ENCODE measurements at regions of chr17 and their contacts with region 1.

Region 1: DNA sequence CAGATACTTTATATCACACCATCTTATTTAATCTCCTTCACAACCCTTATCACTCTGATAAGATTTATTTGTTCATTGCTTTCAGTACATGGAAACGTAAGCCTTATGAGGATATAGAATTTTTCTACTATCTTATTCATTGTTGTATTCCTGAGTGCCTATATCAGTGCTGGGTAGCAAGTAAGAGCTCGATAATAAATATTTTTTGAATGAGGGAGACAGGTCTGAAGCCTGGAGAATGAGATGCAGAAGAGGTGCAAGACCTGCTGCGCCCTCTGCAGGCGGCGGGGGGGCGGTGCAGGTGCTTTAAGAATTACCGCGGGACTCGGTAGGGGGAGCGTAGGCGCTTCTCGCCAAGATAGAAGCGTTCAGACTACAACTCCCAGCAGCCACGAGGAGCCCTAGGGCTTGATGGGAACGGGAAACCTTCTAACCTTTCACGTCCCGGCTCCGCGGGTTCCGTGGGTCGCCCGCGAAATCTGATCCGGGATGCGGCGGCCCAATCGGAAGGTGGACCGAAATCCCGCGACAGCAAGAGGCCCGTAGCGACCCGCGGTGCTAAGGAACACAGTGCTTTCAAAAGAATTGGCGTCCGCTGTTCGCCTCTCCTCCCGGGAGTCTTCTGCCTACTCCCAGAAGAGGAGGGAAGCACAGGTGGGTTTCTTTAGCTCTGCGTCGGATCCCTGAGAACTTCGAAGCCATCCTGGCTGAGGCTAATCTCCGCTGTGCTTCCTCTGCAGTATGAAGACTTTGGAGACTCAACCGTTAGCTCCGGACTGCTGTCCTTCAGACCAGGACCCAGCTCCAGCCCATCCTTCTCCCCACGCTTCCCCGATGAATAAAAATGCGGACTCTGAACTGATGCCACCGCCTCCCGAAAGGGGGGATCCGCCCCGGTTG is at the start of gene WRAP53:
- DNase-seq: peak; percentile 93 to 97 (median 95)
- ATAC-seq: peak; percentile 77
- H3K4me3 ChIP-seq: peak within 1 kb of the TSS; percentile 81 to 92
- H3K4me3 Mint-ChIP-seq: peak within 1 kb of the TSS; percentile 97
- H3K27ac ChIP-seq: peak within 1 kb of the TSS; percentile 98 to 100
- H3K27ac Mint-ChIP-seq: peak within 1 kb of the TSS; percentile 100
- H3K4me1 ChIP-seq: peaks cover 32% of the 10 kb centered on the region
- H3K4me1 Mint-ChIP-seq: peaks cover 37% of the 10 kb centered on the region
- H3K27me3 ChIP-seq: no peaks in the 10 kb centered on the region
- H3K27me3 Mint-ChIP-seq: no peaks in the 10 kb centered on the region
- CTCF ChIP-seq: peak; percentile 98
- total RNA-seq, gene WRAP53: 5.2 to 6.6 TPM

Region 2: DNA sequence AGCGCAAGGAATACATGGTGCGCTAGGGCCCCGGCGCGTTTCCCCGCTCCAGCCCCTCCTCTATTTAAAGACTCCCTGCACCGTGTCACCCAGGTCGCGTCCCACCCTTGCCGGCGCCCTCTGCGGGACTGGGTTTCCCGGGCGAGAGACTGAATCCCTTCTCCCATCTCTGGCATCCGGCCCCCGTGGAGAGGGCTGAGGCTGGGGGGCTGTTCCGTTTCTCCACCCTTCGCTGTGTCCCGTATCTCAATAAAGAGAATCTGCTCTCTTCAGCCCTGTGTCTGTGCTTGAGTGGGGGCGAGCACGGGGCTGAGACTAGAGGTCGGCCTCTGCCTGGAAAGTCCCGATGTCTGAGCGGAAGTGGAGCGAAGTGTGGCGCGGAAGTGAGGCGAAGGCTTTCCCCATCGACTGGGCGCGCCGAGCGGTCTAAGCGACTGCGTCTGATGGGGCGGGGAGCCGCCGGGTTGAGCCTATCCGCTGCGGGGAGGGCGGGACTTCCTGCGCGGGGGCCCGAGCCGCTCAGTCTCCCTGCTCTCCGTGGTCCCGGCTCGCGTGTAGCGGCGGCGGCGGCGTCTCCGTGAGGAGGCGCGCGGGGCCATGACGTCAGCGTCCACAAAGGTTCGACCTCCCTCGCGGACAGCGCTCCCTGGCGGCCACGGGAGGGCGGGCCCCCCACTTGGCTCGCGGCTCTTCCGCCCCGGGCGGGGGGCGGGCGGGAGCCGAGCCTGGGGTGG is 673.7 kb before region 1 on chr17:
- CTCF ChIA-PET with region 1: no interaction called
- POLR2A ChIA-PET with region 1: interaction called, 3 read pairs
- intact Hi-C with region 1: loop called in 1 of 2 experiments (anchors 5 kb)
- DNase-seq: peak; percentile 94 to 100 (median 97)
- ATAC-seq: peak; percentile 79
- H3K4me3 ChIP-seq: peak overlapping the region; percentile 69 to 70
- H3K4me3 Mint-ChIP-seq: peak overlapping the region; percentile 98
- H3K27ac ChIP-seq: peak overlapping the region; percentile 95 to 99
- H3K27ac Mint-ChIP-seq: peak overlapping the region; percentile 100
- H3K4me1 ChIP-seq: peaks cover 63% of the 10 kb centered on the region
- H3K4me1 Mint-ChIP-seq: peaks cover 78% of the 10 kb centered on the region
- H3K27me3 ChIP-seq: no peaks in the 10 kb centered on the region
- H3K27me3 Mint-ChIP-seq: no peaks in the 10 kb centered on the region
- CTCF ChIP-seq: peak; percentile 61

Region 3: DNA sequence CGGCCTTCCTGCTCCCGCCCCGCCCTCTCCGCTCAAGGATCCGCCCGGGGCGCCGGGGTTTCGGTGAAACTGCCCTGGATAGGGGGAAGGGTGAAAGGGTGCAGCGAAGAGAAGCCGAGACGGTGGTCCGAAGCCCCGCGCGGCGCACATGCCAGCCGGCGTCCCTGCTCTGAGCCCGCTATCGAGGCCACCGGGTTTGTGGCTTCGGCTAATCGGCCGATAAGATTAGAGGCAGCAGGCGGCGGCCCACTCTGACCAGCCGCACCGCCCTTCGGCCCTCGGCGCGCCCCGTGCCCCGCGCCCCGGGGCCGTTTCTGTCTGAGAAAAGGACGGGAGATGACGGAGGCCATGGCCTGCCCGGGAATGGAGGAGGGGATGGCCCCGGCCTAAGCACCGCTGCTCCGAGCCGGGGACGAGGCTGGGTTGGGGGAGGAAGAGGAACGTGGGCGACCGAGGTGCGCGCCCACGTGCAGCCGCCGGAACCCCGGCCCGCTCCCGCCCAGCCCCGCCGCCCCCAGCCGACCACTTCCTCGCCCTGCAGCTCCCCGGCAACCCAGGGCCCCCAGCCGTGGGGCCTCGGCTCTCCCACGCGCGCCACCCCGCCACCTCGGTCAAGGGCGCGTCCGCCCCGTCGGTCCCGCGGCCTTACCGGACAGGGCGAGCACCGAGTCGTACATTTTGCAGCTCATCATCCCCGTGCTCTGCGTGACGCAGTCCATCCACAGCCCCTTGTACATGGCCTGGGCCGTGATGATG is 426.8 kb before region 1 on chr17:
- CTCF ChIA-PET with region 1: no interaction called
- POLR2A ChIA-PET with region 1: no interaction called
- intact Hi-C with region 1: no loop called
- DNase-seq: peak in 6 of 9 experiments; percentile 40 to 71 (median 52)
- ATAC-seq: peak; percentile 57
- H3K4me3 ChIP-seq: peak overlapping the region; percentile 45 to 61
- H3K4me3 Mint-ChIP-seq: peak overlapping the region; percentile 80
- H3K27ac ChIP-seq: peak overlapping the region; percentile 31 to 59
- H3K27ac Mint-ChIP-seq: peak overlapping the region; percentile 90
- H3K4me1 ChIP-seq: peaks cover 34% of the 10 kb centered on the region
- H3K4me1 Mint-ChIP-seq: peaks cover 28% of the 10 kb centered on the region
- H3K27me3 ChIP-seq: peaks cover 0 to 11% of the 10 kb centered on the region in 2 experiments
- H3K27me3 Mint-ChIP-seq: no peaks in the 10 kb centered on the region
- CTCF ChIP-seq: no peak

Region 4: GRCh38 chr17:7280519-7281429 is 407.4 kb before region 1 on chr17:
- CTCF ChIA-PET with region 1: interaction called, 3 read pairs
- POLR2A ChIA-PET with region 1: no interaction called
- intact Hi-C with region 1: loop called in 1 of 2 experiments (anchors 1 kb)
- DNase-seq: peak; percentile 76 to 92 (median 86)
- ATAC-seq: peak; percentile 88
- H3K4me3 ChIP-seq: peak overlapping the region; percentile 41 to 46
- H3K4me3 Mint-ChIP-seq: peak overlapping the region; percentile 73
- H3K27ac ChIP-seq: no peak overlapping the region
- H3K27ac Mint-ChIP-seq: no peak overlapping the region
- H3K4me1 ChIP-seq: peaks cover 25% of the 10 kb centered on the region
- H3K4me1 Mint-ChIP-seq: peaks cover 16% of the 10 kb centered on the region
- H3K27me3 ChIP-seq: peaks cover 0 to 26% of the 10 kb centered on the region in 2 experiments
- H3K27me3 Mint-ChIP-seq: peaks cover 9% of the 10 kb centered on the region
- CTCF ChIP-seq: peak; percentile 84

Region 5: GRCh38 chr17:7403977-7404736 is 284.0 kb before region 1 on chr17 and contains the start of gene TMEM256:
- CTCF ChIA-PET with region 1: no interaction called
- POLR2A ChIA-PET with region 1: no interaction called
- intact Hi-C with region 1: no loop called
- DNase-seq: peak; percentile 90 to 99 (median 94)
- ATAC-seq: peak; percentile 83
- H3K4me3 ChIP-seq: peak within 1 kb of the TSS; percentile 75 to 83
- H3K4me3 Mint-ChIP-seq: peak within 1 kb of the TSS; percentile 95
- H3K27ac ChIP-seq: peak within 1 kb of the TSS; percentile 61 to 81
- H3K27ac Mint-ChIP-seq: peak within 1 kb of the TSS; percentile 96
- H3K4me1 ChIP-seq: peaks cover 24% of the 10 kb centered on the region
- H3K4me1 Mint-ChIP-seq: peaks cover 31% of the 10 kb centered on the region
- H3K27me3 ChIP-seq: no peaks in the 10 kb centered on the region
- H3K27me3 Mint-ChIP-seq: no peaks in the 10 kb centered on the region
- CTCF ChIP-seq: no peak
- total RNA-seq, gene TMEM256: 27.1 to 29.1 TPM

Region 6: DNA sequence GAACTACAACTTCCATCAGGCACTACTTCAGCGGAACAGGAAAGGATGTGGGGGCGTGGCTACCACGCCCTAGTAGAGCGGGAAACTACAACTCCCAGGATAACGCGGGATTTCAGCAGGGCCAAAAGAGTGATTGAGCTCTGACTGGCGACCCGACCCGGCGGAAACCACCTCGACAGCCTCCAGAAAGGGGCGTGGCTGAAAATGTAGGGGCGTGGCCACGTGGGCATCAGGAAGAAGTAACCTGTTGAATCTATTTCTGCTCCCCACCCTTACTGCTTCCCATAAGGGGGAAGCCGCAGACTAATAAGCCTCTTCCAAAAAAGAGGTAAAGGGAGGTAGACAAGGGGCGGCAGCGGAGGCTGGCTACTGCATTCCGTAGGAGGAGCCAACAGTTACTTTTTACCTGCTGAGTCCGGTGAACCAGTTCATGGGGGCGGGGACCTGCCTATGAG is 252.9 kb before region 1 on chr17 and contains the start of gene TMEM102:
- CTCF ChIA-PET with region 1: interaction called, 27 read pairs
- POLR2A ChIA-PET with region 1: interaction called, 61 read pairs
- intact Hi-C with region 1: loop called (anchors 1 kb)
- DNase-seq: peak; percentile 96 to 99 (median 98)
- ATAC-seq: peak; percentile 81
- H3K4me3 ChIP-seq: peak within 1 kb of the TSS; percentile 70 to 82
- H3K4me3 Mint-ChIP-seq: peak within 1 kb of the TSS; percentile 92
- H3K27ac ChIP-seq: peak within 1 kb of the TSS; percentile 66 to 90
- H3K27ac Mint-ChIP-seq: peak within 1 kb of the TSS; percentile 95
- H3K4me1 ChIP-seq: peaks cover 38% of the 10 kb centered on the region
- H3K4me1 Mint-ChIP-seq: peaks cover 38% of the 10 kb centered on the region
- H3K27me3 ChIP-seq: peaks cover 0 to 4% of the 10 kb centered on the region in 2 experiments
- H3K27me3 Mint-ChIP-seq: peaks cover 12% of the 10 kb centered on the region
- CTCF ChIP-seq: no peak
- total RNA-seq, gene TMEM102: 13.2 to 15.3 TPM

Region 7: DNA sequence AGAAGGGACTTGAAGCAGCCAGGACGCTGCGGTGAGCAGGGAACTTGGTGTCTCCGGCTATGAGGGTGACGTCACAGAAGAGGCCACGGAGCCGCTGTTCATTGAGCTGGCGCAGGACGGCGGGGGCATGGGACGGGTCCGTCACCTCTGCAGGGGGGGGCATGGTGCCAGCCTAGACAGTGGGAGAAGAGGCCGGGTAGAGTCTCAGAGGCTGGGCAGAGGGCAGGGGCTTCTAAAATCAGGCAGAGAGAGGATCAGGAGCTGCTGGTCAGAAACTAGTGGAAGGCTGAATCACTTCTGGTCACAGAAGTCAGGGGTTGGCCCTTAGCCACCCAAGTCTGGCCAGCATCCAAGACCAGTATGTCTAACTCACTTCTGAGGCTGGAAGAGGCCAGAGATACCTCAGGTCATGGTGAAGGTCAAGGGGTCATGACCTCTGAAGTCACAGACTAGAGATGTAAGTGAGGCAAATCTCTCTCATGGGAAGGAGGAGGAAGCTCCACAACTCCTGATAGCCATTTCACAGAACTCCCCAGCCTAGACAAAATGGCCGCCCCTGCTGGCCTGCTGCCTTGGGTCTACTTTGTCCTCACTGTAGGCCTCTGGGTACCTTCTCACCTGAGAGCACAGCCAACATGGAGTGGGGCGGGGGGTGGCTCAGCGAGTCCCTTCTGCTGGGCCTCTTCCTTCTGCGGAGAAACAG is 221.4 kb before region 1 on chr17:
- CTCF ChIA-PET with region 1: no interaction called
- POLR2A ChIA-PET with region 1: no interaction called
- intact Hi-C with region 1: no loop called
- DNase-seq: no peak
- ATAC-seq: no peak
- H3K4me3 ChIP-seq: no peak overlapping the region
- H3K4me3 Mint-ChIP-seq: no peak overlapping the region
- H3K27ac ChIP-seq: no peak overlapping the region
- H3K27ac Mint-ChIP-seq: peak overlapping the region; percentile 52
- H3K4me1 ChIP-seq: peaks cover 19% of the 10 kb centered on the region
- H3K4me1 Mint-ChIP-seq: peaks cover 27% of the 10 kb centered on the region
- H3K27me3 ChIP-seq: no peaks in the 10 kb centered on the region
- H3K27me3 Mint-ChIP-seq: no peaks in the 10 kb centered on the region
- CTCF ChIP-seq: no peak

Region 8: GRCh38 chr17:7502987-7503386 is 185.2 kb before region 1 on chr17:
- CTCF ChIA-PET with region 1: no interaction called
- POLR2A ChIA-PET with region 1: no interaction called
- intact Hi-C with region 1: no loop called
- DNase-seq: peak in 2 of 9 experiments; percentile 34 to 47
- ATAC-seq: peak; percentile 41
- H3K4me3 ChIP-seq: no peak overlapping the region
- H3K4me3 Mint-ChIP-seq: no peak overlapping the region
- H3K27ac ChIP-seq: no peak overlapping the region
- H3K27ac Mint-ChIP-seq: no peak overlapping the region
- H3K4me1 ChIP-seq: no peaks in the 10 kb centered on the region
- H3K4me1 Mint-ChIP-seq: no peaks in the 10 kb centered on the region
- H3K27me3 ChIP-seq: no peaks in the 10 kb centered on the region
- H3K27me3 Mint-ChIP-seq: no peaks in the 10 kb centered on the region
- CTCF ChIP-seq: no peak

Region 9: DNA sequence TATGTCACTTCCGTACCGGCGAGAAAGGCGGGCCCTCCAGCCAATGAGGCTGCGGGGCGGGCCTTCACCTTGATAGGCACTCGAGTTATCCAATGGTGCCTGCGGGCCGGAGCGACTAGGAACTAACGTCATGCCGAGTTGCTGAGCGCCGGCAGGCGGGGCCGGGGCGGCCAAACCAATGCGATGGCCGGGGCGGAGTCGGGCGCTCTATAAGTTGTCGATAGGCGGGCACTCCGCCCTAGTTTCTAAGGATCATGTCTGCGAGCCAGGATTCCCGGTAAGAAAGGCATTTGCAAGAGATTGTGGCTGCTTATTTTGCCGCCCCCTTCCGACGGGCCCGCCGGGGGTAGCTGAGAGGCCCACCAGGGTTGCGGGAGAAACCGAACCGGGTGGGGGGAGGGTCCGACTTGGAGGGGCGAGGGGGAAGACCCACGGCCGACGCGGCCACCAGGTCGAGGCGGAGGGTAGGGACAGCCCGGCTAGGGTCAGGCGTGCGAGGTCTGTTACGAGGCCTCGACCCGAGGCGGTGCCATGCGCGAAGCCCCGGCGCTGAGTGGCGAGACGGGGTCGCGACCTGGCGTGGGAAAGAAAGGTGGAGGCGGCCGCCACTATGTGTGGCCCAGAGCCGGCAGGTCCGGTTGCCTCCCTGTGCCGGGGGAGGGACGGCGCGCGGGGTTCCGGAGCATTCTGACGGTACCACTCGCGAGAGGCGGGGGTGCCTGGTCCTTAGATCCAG is 115.4 kb before region 1 on chr17:
- CTCF ChIA-PET with region 1: interaction called, 5 read pairs
- POLR2A ChIA-PET with region 1: interaction called, 20 read pairs
- intact Hi-C with region 1: loop called (anchors 1 kb)
- DNase-seq: peak in 8 of 9 experiments; percentile 99 to 100 (median 100)
- ATAC-seq: peak; percentile 83
- H3K4me3 ChIP-seq: peak overlapping the region; percentile 97 to 100
- H3K4me3 Mint-ChIP-seq: peak overlapping the region; percentile 99
- H3K27ac ChIP-seq: peak overlapping the region; percentile 98 to 99
- H3K27ac Mint-ChIP-seq: peak overlapping the region; percentile 96
- H3K4me1 ChIP-seq: peaks cover 28% of the 10 kb centered on the region
- H3K4me1 Mint-ChIP-seq: peaks cover 48% of the 10 kb centered on the region
- H3K27me3 ChIP-seq: no peaks in the 10 kb centered on the region
- H3K27me3 Mint-ChIP-seq: no peaks in the 10 kb centered on the region
- CTCF ChIP-seq: no peak

Region 10: GRCh38 chr17:7650509-7651096 is 37.6 kb before region 1 on chr17 and contains the start of gene ATP1B2:
- CTCF ChIA-PET with region 1: interaction called, 3 read pairs
- POLR2A ChIA-PET with region 1: interaction called, 46 read pairs
- intact Hi-C with region 1: loop called (anchors 1 kb)
- DNase-seq: peak; percentile 44 to 88 (median 83)
- ATAC-seq: peak; percentile 94
- H3K4me3 ChIP-seq: peak within 1 kb of the TSS; percentile 47 to 72
- H3K4me3 Mint-ChIP-seq: peak within 1 kb of the TSS; percentile 88
- H3K27ac ChIP-seq: no peak within 1 kb of the TSS
- H3K27ac Mint-ChIP-seq: no peak within 1 kb of the TSS
- H3K4me1 ChIP-seq: peaks cover 17% of the 10 kb centered on the region
- H3K4me1 Mint-ChIP-seq: peaks cover 18% of the 10 kb centered on the region
- H3K27me3 ChIP-seq: peaks cover 8 to 19% of the 10 kb centered on the region in 2 experiments
- H3K27me3 Mint-ChIP-seq: peaks cover 33% of the 10 kb centered on the region
- CTCF ChIP-seq: no peak
- total RNA-seq, gene ATP1B2: 0.22 TPM in 1 of 2 experiments, not detected in the other

Region 11: DNA sequence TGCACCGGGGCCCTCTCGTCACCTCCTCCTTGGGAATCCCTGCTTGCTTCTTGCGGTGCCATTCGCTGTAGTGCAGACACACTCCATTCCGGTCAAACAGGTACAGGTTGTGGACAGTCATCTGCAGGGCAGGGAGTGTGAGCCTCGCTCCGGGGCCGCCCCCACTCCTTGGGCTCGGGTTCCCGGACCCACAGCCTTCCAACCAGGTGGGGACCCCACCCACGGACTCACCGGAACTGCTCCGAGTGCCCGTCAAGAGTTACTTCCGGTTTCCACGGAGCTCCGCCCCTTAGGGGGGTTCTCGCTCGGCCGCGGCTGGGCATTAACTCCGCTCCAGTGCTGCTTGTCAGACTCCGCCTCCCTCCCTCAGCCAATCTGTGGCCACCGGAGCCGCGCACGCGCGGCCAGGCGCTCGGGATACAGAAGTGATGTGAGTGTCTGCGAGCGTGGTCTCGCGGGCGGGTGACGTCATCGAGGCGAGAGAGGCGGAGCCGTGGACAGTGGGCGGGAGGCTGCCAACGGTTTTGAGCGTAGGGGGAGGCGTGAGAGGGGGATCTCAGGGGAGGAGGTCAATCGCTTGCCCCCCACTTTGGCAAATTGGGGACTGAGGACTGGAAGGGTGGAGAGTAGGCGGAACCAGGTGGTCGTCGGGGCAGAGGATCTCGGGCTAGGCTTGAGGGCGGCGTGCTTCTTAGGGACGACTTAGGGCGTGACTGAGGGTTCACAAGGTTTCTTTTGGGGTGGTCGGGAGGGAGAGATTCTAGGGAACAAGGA is 243.7 kb after region 1 on chr17 and contains the starts of genes CNTROB and TRAPPC1:
- CTCF ChIA-PET with region 1: no interaction called
- POLR2A ChIA-PET with region 1: interaction called, 7 read pairs
- intact Hi-C with region 1: loop called in 1 of 2 experiments (anchors 2 kb)
- DNase-seq: peak; percentile 99 to 100 (median 99)
- ATAC-seq: peak; percentile 93
- H3K4me3 ChIP-seq: peak within 1 kb of the TSS; percentile 96
- H3K4me3 Mint-ChIP-seq: peak within 1 kb of the TSS; percentile 100
- H3K27ac ChIP-seq: peak within 1 kb of the TSS; percentile 85
- H3K27ac Mint-ChIP-seq: peak within 1 kb of the TSS; percentile 99
- H3K4me1 ChIP-seq: peaks cover 22% of the 10 kb centered on the region
- H3K4me1 Mint-ChIP-seq: peaks cover 50% of the 10 kb centered on the region
- H3K27me3 ChIP-seq: no peaks in the 10 kb centered on the region
- H3K27me3 Mint-ChIP-seq: no peaks in the 10 kb centered on the region
- CTCF ChIP-seq: no peak
- total RNA-seq, gene CNTROB: 20.1 to 23.6 TPM
- total RNA-seq, gene TRAPPC1: 29.6 to 39.4 TPM